ENCODE measurements at regions of chr21 and their contacts with region 1.

Region 1: DNA sequence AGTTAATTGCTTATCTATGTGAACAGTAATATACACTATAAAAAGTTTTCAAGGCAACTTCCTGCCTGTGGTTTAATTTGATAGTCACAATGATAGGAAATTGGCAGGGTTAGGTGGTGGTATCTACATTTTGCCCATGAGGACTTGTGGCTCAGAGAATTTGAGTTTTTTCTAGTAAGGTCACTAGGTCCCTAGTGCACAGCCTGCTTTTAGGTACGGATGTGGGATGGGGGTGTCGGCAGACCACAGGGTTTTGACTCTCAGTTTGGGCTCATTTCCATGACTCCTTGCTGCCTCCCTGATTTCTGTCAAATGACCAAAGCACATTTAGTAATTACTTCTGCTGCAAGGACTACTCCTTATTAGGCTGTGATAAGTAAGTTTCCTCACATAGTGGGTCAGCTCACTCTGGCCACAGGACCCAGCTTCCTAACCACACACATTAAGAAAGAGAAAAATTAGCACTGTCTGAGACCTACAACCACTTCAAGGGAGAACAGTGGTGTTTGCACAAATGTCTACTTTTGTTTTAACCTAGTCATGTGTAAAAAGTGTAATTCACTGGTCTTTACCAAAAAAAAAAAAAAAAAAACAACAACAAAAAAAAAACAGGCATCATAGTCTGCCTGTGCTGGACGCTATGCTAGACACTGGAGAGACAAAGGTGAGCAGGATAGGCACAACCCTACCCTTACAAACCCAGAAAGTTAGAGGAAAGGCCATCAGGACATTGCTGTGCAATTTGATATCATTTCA is 43.7 kb downstream of the MRPL39 start:
- DNase-seq: no peak
- CTCF ChIP-seq: no peak

Region 2: GRCh38 chr21:25507522-25507921 is 56.0 kb before region 1 on chr21:
- CTCF ChIA-PET with region 1: interaction called, 13 read pairs
- POLR2A ChIA-PET with region 1: interaction called, 5 read pairs
- DNase-seq: no peak
- CTCF ChIP-seq: peak; percentile 39

Region 3: DNA sequence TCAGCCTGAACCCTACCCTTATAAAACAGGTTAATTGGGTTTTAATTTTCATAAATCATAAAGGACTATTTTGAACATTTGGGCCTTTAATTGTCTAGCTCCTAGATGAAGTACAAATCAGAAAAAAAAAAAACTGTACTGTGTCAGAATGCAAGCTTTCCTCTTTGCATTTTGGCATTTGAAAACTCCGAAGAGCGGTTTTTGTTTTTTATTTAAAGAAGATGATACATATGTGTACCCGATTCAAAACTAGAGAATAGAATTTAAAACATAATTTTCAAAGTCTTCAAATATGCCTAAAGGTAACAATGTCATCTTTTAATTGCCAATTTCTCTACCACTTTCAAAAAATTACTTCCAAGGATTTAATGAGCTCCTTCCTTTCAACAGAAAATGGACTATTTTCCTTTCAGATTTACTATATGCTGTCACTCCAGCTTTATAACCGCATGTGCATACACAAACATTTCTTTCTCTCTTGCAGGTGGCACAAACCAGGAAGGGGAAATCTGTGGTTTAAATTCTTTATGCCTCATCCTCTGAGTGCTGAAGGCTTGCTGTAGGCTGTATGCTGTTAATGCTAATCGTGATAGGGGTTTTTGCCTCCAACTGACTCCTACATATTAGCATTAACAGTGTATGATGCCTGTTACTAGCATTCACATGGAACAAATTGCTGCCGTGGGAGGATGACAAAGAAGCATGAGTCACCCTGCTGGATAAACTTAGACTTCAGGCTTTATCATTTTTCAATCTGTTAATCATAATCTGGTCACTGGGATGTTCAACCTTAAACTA is 10.1 kb after region 1 on chr21:
- CTCF ChIA-PET with region 1: interaction called, 5 read pairs
- POLR2A ChIA-PET with region 1: interaction called, 14 read pairs
- DNase-seq: no peak
- CTCF ChIP-seq: no peak

Measured in GM10248 (cell line).